Ascending aorta (tissue), 2 donors: ENCODE measurements at regions of chr11 and their contacts with region 1.

Region 1: DNA sequence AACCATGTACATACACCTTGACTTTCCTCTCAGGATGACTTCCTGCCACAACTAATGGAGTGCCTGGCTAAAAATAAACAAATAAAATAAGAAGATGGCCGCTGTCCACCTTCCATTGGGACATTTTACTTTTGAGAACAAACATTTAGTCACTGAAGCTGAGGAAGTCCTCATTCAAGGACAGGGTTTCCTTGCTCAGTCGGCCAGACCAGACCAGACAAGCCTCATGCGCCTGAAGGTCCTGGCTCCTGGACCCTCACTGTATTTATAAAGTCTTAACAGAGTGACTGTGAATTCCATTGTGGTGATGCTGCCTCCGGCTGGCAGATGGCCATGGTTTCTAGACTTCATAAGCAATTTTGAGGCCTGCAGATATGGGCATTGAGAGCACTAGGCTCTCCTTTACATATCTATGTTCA is 114.5 kb downstream of the MAML2 start:
- DNase-seq: peak; percentile 64 to 92
- H3K4me3 ChIP-seq: no peak overlapping the region
- H3K27ac ChIP-seq: peak overlapping the region; percentile 93 to 96
- H3K4me1 ChIP-seq: peaks cover 12 to 38% of the 10 kb centered on the region in 2 donors
- H3K27me3 ChIP-seq: no peaks in the 10 kb centered on the region
- CTCF ChIP-seq: no peak

Region 2: GRCh38 chr11:96054870-96055705 is 173.4 kb before region 1 on chr11:
- intact Hi-C with region 1: loop called (anchors 5 kb)
- DNase-seq: no peak
- H3K4me3 ChIP-seq: no peak overlapping the region
- H3K27ac ChIP-seq: peak overlapping the region; percentile 67 to 75
- H3K4me1 ChIP-seq: peaks cover 4 to 35% of the 10 kb centered on the region in 2 donors
- H3K27me3 ChIP-seq: no peaks in the 10 kb centered on the region
- CTCF ChIP-seq: peak; percentile 43 to 63 (median 46)